Ovary (tissue), 10 donors: ENCODE measurements at regions of chr6 and their contacts with region 1.

Region 1: GRCh38 chr6:53725791-53726431 is 60.4 kb upstream of the KLHL31 start:
- DNase-seq: peak; percentile 61 to 87 (median 78)
- H3K4me3 ChIP-seq: no peak overlapping the region
- H3K27ac ChIP-seq: no peak overlapping the region
- H3K4me1 ChIP-seq: peaks cover 2% of the 10 kb centered on the region
- H3K27me3 ChIP-seq: no peaks in the 10 kb centered on the region
- CTCF ChIP-seq: peak; percentile 58 to 71 (median 71)
- EP300 ChIP-seq: no peak
- POLR2A ChIP-seq: no peak

Region 2: GRCh38 chr6:53956068-53956711 is 230.3 kb after region 1 on chr6:
- intact Hi-C with region 1: loop called in 1 of 4 experiments (anchors 10 kb)
- DNase-seq: peak; percentile 51 to 68 (median 59)
- H3K4me3 ChIP-seq: no peak overlapping the region
- H3K27ac ChIP-seq: no peak overlapping the region
- H3K4me1 ChIP-seq: no peaks in the 10 kb centered on the region
- H3K27me3 ChIP-seq: no peaks in the 10 kb centered on the region
- CTCF ChIP-seq: peak in 2 of 3 donors; percentile 16 to 26
- EP300 ChIP-seq: no peak
- POLR2A ChIP-seq: no peak

Region 3: DNA sequence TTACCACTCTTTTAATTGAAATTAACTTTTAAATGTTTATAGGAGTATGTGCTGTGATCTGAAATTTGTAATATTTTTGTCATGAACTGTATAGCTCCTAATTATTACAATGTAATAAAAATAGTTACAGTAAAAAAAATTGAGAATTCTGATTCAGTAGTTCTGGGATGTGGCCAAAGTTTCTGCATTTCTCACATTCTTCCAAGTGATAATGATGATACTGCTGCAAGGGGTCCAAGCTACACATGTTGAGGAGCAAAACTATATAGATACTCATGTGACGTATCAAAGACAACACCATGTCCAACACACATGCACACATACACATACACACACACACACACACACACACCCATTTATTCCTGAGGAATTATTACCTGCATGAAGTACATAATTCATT is 1049.7 kb after region 1 on chr6:
- intact Hi-C with region 1: no loop called
- DNase-seq: no peak
- H3K4me3 ChIP-seq: no peak overlapping the region
- H3K27ac ChIP-seq: no peak overlapping the region
- H3K4me1 ChIP-seq: no peaks in the 10 kb centered on the region
- H3K27me3 ChIP-seq: no peaks in the 10 kb centered on the region
- CTCF ChIP-seq: no peak
- EP300 ChIP-seq: no peak
- POLR2A ChIP-seq: no peak